Activated CD4-positive, alpha-beta memory T cell treated with anti-CD3 and anti-CD28 coated beads, Interleukin-2, amount 10 ng/mL, durations not matched to agents 7 days and 5 days (primary cell): ENCODE measurements at regions of chr6 and their contacts with region 1.

Region 1: GRCh38 chr6:27753668-27754407 is 158.4 kb downstream of the OR2B2 start:
- DNase-seq: peak; percentile 80
- H3K4me3 Mint-ChIP-seq: peak overlapping the region; percentile 73
- H3K27ac Mint-ChIP-seq: peak overlapping the region; percentile 100
- H3K4me1 Mint-ChIP-seq: peaks cover 48% of the 10 kb centered on the region
- H3K27me3 Mint-ChIP-seq: peaks cover 5% of the 10 kb centered on the region

Region 2: DNA sequence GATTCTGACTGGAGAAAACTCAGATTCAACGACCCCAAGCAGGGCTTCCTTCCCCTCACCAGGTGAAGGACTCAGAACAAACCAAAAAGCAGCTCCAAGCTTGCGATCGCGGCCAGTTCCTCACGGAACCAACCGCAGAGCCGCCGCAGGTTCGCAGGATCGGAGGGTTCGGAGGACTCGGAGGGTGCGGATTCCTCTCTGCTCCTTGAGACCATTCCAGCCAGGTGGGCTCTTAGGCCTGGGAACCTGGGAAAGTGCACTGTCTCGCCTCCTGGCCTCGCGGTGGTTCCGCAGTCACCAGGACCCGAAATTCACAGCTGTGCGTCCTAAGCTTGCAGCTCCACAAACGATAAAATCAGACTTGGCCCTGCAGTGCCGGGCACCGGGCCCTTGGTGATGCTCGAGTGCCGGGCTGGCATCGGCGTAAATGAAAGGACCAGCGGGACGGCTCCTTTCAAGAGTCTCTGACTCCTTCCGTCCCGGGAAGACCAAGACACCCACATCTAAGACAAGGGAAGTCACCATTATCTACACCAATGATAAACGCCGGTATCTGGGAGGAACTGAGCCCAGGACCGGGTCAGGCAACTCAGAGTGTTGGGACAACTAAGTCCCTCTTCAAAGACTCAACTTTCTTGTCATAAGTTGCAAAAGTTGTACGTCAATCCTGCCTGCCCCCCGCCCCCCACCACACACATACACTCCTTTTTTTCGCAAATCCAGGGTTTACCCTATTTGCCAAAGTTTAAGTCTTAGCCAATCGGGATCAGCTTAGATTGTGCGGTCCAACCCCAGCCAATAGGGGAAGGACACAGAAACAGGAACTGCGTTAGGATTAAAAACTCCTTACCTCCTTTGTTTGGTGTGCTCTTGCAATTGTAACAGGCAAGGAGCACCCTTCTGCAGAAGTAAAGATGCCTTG is 576.1 kb before region 1 on chr6:
- CTCF ChIA-PET with region 1: interaction called, 12 read pairs
- POLR2A ChIA-PET with region 1: interaction called, 3 read pairs
- DNase-seq: peak; percentile 80
- H3K4me3 Mint-ChIP-seq: peak overlapping the region; percentile 92
- H3K27ac Mint-ChIP-seq: peak overlapping the region; percentile 88
- H3K4me1 Mint-ChIP-seq: peaks cover 20% of the 10 kb centered on the region
- H3K27me3 Mint-ChIP-seq: peaks cover 21% of the 10 kb centered on the region

Region 3: DNA sequence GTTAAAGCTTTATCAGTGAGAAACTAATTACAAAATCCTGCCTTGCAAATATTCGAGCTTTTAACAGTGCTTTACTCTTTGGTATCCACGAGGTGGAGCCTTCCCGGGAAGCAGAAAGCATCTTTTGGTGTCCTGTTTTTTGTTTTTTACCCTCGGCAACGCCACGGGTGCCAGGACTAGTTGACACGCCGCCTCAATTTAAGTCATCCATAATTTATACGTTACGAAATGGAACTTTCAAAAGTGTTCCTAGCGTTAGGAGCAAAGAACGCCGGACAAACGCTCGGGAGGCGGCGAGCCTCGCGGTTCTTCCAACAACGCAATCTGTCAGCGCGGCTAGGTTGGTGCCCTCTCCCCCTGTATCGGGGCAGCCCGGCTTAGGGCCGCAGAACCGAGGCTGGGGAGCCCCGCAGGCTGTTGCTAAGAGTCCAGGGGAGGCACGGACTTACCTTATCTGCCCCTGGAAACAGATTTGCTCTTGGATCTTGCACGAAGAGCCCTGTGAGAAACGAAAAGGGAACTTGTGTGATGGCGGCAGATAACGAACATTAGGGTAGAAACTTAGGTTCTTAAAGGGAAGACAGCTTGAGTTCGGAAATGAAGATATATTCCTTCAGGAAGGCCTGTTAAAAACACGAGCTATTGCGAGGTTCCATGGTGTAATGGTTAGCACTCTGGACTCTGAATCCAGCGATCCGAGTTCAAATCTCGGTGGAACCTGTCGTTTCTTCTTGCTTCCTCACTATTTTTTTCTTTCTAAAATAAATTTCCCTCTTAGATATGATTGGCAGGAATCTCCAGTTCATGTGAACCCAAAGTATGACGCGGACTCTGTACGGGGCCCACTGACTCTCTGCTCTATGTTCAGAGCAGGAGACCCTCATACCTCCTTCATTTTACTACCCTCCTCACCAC is 234.7 kb before region 1 on chr6:
- CTCF ChIA-PET with region 1: interaction called, 23 read pairs
- POLR2A ChIA-PET with region 1: interaction called, 8 read pairs
- DNase-seq: peak; percentile 52
- H3K4me3 Mint-ChIP-seq: peak overlapping the region; percentile 82
- H3K27ac Mint-ChIP-seq: peak overlapping the region; percentile 72
- H3K4me1 Mint-ChIP-seq: peaks cover 24% of the 10 kb centered on the region
- H3K27me3 Mint-ChIP-seq: peaks cover 31% of the 10 kb centered on the region

Region 4: DNA sequence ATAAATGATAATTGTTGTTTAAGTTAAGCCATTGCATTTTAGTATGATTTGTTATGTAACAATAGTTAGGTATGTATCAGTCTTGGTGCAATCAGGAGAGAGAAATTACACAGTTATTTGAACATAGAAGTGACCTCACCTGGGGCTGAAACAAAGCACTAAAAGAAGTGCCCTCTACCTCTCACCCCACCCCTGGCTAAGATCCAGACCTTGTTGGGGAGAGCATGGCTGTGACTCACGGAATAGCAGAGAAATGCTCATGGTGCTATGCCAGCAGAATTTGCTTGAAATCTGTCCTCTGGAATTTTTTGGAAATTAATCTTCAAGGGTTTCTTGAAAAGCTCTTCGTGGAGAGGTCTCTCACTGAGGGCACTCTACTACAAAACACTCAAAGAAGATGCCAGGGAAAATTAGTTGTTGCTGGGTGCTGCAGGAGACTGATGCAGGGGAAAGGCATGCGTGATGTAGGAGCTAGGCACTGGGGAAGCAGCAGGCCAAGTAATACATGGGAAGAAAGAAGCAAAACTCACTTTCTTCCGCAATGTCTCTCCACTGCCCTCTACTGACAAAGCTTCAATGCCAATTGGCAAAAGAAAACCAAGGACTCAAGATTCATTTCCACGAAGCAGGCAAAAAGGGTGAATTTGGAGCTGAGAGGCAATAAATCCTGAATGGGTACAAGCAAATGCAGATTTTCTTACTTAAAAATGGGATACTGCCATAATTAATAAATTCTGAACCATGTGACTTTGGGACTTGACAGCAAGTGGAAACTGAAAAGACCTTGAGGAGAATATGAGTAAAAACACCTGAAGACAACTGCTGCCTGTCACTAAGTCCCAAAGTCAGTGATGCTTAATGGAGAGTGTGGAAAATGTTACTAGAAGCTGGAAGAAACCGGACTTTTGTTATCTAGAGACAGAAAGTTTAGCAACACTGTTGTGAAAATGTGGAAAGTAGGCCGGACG is 144.6 kb before region 1 on chr6:
- CTCF ChIA-PET with region 1: interaction called, 10 read pairs
- POLR2A ChIA-PET with region 1: no interaction called
- DNase-seq: no peak
- H3K4me3 Mint-ChIP-seq: no peak overlapping the region
- H3K27ac Mint-ChIP-seq: no peak overlapping the region
- H3K4me1 Mint-ChIP-seq: peaks cover 14% of the 10 kb centered on the region
- H3K27me3 Mint-ChIP-seq: peaks cover 38% of the 10 kb centered on the region

Region 5: GRCh38 chr6:27687154-27688013 is 66.5 kb before region 1 on chr6:
- CTCF ChIA-PET with region 1: interaction called, 14 read pairs
- POLR2A ChIA-PET with region 1: no interaction called
- DNase-seq: peak; percentile 82
- H3K4me3 Mint-ChIP-seq: peak overlapping the region; percentile 76
- H3K27ac Mint-ChIP-seq: peak overlapping the region; percentile 63
- H3K4me1 Mint-ChIP-seq: peaks cover 20% of the 10 kb centered on the region
- H3K27me3 Mint-ChIP-seq: peaks cover 18% of the 10 kb centered on the region

Region 6: DNA sequence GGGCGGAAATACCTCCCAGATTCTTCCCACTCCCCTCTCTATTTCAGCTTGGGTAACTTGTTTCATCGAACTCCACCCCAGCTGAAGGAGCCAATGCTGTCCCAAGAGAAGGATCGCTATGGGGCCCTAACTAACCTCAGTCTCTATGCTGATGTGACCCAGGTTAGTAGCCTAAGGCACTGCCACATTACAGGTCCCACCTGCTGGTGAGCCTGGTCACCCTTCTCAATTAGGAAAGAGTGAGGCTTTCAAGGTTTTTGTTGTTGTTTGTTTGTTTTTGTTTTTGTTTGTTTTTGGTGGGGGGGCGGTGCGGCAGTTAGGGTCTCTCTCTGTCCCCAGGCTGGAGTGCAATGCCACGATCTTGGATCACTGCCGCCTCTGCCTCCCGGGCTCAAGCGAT is 10.0 kb before region 1 on chr6:
- CTCF ChIA-PET with region 1: interaction called, 30 read pairs
- POLR2A ChIA-PET with region 1: interaction called, 8 read pairs
- DNase-seq: no peak
- H3K4me3 Mint-ChIP-seq: no peak overlapping the region
- H3K27ac Mint-ChIP-seq: no peak overlapping the region
- H3K4me1 Mint-ChIP-seq: peaks cover 10% of the 10 kb centered on the region
- H3K27me3 Mint-ChIP-seq: peaks cover 27% of the 10 kb centered on the region

Region 7: DNA sequence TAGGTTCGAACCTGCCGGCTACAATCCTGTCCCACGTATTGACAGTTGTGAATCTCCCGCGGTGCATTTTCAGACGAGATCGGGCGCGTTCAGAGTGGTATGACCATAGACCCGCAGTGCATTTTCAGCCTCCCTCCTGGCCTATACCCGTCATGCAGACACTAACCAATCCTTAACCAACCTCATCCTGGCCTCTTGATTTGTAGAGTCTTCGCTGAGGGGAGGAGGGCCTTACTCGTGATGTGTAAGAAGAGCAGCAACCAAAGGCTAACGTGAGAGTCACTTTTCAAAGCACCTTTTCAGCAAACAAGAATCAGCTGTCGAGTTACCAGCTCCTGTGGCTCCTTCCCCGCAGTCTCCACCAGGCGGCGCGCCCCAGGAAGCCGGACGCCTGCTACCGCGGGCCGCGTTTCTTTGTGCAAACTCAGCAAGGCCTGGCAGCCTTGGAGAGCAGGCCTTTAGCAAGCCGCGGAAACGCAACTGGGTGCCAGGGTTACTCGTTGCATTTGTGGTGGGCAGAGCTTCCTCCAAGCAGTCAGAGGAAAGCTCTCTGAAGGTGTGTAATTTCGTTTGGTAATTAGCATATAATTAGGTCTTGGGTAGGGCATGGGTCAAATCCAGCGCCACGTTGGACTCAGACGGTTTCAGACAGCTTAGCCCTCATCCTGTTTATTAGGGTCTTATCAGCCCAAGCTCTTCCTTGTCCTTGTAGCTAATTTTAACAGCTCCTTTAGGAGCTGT is 18.6 kb after region 1 on chr6:
- CTCF ChIA-PET with region 1: interaction called, 51 read pairs
- POLR2A ChIA-PET with region 1: interaction called, 12 read pairs
- DNase-seq: peak; percentile 94
- H3K4me3 Mint-ChIP-seq: peak overlapping the region; percentile 6
- H3K27ac Mint-ChIP-seq: peak overlapping the region; percentile 46
- H3K4me1 Mint-ChIP-seq: peaks cover 22% of the 10 kb centered on the region
- H3K27me3 Mint-ChIP-seq: peaks cover 19% of the 10 kb centered on the region